ENCODE measurements at regions of chr10 and their contacts with region 1.

Region 1: DNA sequence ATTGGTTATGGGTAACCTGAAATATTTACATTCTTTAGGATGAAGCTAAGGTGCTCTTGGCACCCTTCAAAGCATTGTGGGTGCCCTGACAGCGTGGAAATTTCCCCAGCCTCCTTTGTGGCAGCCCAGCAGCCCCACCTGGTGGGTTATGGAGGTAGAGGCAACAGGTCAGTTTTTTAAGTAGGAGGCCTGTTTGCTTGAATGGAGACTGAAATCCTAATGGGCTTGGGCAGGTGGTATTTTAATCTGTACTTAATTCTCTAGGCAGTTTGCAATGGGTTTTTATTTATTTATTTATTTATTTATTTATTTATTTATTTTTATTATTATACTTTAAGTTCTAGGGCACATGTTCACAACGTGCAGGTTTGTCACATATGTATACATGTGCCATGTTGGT is 139.4 kb downstream of the EPC1 start:
- DNase-seq: no peak
- ATAC-seq: peak; percentile 94
- H3K4me3 ChIP-seq: no peak overlapping the region
- H3K27ac ChIP-seq: no peak overlapping the region
- H3K4me1 ChIP-seq: no peaks in the 10 kb centered on the region
- H3K27me3 ChIP-seq: no peaks in the 10 kb centered on the region
- CTCF ChIP-seq: peak; percentile 61 to 76 (median 74)
- EP300 ChIP-seq: no peak
- POLR2A ChIP-seq: no peak
- RAD21 ChIP-seq: peak; percentile 84

Region 2: DNA sequence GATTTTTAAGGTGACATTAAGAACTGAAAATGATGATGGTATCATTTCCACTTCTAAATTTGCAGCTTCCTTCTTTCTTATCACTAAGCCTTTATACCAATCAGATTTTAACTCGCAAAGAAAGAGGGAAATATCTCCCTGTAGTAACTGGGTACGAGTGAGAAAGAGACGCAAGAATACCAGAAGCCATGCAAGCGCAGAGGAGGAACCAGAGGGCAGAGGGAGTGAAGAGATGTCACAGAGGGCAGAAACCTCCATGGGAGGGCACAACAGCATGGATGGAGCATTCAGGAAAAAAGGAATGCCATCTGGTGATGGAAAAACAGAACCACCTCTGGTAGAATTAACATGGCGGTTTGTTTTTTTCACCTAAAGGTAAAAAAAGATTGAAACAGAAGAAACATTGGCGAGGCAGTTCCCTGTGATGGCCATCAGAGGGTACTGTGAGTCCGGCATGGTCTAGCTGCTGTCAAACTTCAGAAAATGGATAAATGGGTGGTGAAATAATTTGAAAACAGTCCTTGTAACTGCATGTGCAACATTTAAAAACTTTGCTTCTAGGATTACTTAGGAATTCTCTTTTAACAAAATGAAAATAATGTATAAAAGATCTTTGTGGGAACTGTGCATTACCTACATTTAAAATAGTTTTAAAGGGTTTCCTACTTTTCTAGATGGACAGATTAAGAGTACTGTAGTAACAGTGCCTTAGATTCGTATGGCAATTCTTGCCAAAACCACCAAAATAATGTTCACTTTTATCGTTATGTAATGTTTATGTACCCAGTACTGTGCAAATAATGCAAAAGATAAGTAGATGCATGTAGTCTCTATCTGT is 370.8 kb before region 1 on chr10:
- CTCF ChIA-PET with region 1: interaction called, 3 read pairs
- POLR2A ChIA-PET with region 1: no interaction called
- RAD21 ChIA-PET with region 1: no interaction called
- SMC1A ChIA-PET with region 1: interaction called, 3 read pairs
- in situ Hi-C with region 1: no loop called
- intact Hi-C with region 1: loop called (anchors 10 kb)
- DNase-seq: no peak
- ATAC-seq: peak; percentile 79
- H3K4me3 ChIP-seq: no peak overlapping the region
- H3K27ac ChIP-seq: no peak overlapping the region
- H3K4me1 ChIP-seq: no peaks in the 10 kb centered on the region
- H3K27me3 ChIP-seq: no peaks in the 10 kb centered on the region
- CTCF ChIP-seq: peak; percentile 62 to 78 (median 63); a peak in 5 of 6 replicates
- EP300 ChIP-seq: no peak
- POLR2A ChIP-seq: no peak
- RAD21 ChIP-seq: peak; percentile 80

Region 3: DNA sequence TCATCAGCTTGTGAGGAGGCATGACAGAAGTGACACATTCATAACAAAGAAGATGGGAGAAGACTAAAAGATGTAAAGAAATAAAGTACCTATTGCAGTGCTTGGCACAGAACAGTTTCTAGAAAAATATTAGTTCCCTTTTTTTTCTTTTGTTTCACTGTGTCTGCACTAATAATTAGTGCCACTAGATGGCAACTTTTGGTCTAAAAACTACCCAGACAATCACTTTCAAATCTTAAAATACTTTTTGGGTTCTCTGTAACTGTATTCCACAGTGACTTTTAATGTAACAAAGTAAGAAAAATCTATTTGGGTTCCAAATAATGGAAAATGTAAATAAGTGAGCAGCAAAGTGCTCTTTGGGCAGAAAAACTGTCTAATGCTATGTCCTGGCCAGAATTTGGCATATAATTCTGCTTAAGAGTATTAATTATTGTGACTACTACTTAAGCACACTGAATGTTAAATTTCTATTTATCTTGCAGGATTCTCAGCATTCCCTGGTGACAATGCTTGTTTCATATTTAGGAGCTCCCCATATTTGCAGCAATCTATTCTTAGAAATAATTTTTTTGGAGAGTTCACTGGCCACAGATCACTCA is 16.6 kb before region 1 on chr10:
- CTCF ChIA-PET with region 1: interaction called, 11 read pairs
- POLR2A ChIA-PET with region 1: no interaction called
- RAD21 ChIA-PET with region 1: interaction called, 3 read pairs
- SMC1A ChIA-PET with region 1: interaction called, 8 read pairs
- in situ Hi-C with region 1: no loop called
- intact Hi-C with region 1: loop called (anchors 1 kb)
- DNase-seq: no peak
- ATAC-seq: peak; percentile 87
- H3K4me3 ChIP-seq: no peak overlapping the region
- H3K27ac ChIP-seq: no peak overlapping the region
- H3K4me1 ChIP-seq: no peaks in the 10 kb centered on the region
- H3K27me3 ChIP-seq: no peaks in the 10 kb centered on the region
- CTCF ChIP-seq: peak; percentile 54 to 73 (median 69)
- EP300 ChIP-seq: no peak
- POLR2A ChIP-seq: no peak
- RAD21 ChIP-seq: peak; percentile 77

Region 4: DNA sequence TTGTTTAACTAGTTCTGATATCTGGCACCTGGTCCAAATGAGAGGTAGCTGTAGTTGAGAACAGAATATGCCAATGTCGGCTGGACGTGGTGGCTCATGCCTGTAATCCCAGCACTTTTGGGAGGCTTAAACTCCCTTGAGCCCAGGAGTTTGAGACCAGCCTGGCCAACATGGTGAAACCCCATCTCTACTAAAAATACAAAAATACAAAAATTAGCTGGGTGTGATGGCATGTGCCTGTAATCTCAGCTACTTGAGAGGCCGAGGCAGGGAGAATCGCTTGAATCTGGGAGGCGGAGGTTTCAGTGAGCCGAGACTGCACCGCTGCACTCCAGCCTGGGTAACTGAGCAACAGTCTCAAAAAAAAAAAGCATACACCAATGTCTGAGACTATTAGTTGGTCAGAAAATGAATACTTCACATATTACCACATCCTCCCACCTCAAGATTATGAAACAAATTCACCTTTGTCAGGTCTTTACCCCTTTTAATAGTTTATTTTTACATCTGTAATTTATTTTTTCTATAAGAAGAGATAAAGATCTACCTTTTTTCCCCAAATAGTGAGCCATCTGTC is 100.6 kb after region 1 on chr10:
- CTCF ChIA-PET with region 1: no interaction called
- POLR2A ChIA-PET with region 1: no interaction called
- RAD21 ChIA-PET with region 1: no interaction called
- SMC1A ChIA-PET with region 1: no interaction called
- in situ Hi-C with region 1: no loop called
- intact Hi-C with region 1: no loop called
- DNase-seq: no peak
- ATAC-seq: peak; percentile 92
- H3K4me3 ChIP-seq: no peak overlapping the region
- H3K27ac ChIP-seq: no peak overlapping the region
- H3K4me1 ChIP-seq: no peaks in the 10 kb centered on the region
- H3K27me3 ChIP-seq: no peaks in the 10 kb centered on the region
- CTCF ChIP-seq: no peak
- EP300 ChIP-seq: no peak
- POLR2A ChIP-seq: no peak
- RAD21 ChIP-seq: no peak

Region 5: DNA sequence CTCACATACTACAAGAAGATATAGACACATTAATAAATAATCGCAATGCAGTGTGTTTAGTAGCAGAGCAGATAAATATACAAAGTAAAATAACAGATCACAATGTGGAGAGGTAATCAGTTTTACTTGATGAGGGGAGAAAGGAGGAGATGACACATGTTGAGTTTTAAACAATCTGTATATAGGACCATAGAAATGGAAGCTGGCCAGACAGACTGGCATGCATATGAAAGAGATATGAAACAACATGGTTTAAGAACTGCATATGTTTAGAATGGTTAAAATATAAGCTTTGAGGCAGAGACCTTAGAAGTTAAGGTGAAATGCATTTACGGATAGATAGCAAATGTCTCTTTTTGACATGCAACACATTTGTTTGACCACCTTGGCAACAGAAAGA is 218.6 kb after region 1 on chr10:
- CTCF ChIA-PET with region 1: no interaction called
- POLR2A ChIA-PET with region 1: no interaction called
- RAD21 ChIA-PET with region 1: no interaction called
- SMC1A ChIA-PET with region 1: no interaction called
- in situ Hi-C with region 1: no loop called
- intact Hi-C with region 1: no loop called
- DNase-seq: no peak
- ATAC-seq: no peak
- H3K4me3 ChIP-seq: no peak overlapping the region
- H3K27ac ChIP-seq: no peak overlapping the region
- H3K4me1 ChIP-seq: no peaks in the 10 kb centered on the region
- H3K27me3 ChIP-seq: no peaks in the 10 kb centered on the region
- CTCF ChIP-seq: no peak
- EP300 ChIP-seq: no peak
- POLR2A ChIP-seq: no peak
- RAD21 ChIP-seq: no peak